GM23248 (cell line): ENCODE measurements at regions of chrX and their contacts with region 1.

Region 1: GRCh38 chrX:34656842-34657725 is at the start of gene TMEM47:
- DNase-seq: peak; percentile 84
- H3K4me3 ChIP-seq: peak within 1 kb of the TSS; percentile 95
- H3K27ac ChIP-seq: peak within 1 kb of the TSS; percentile 75
- H3K4me1 ChIP-seq: peaks cover 20% of the 10 kb centered on the region; the same call in 1 of the 2 replicates
- H3K27me3 ChIP-seq: no peaks in the 10 kb centered on the region
- total RNA-seq, gene TMEM47: 185 and 188 TPM in 2 replicates

Region 2: DNA sequence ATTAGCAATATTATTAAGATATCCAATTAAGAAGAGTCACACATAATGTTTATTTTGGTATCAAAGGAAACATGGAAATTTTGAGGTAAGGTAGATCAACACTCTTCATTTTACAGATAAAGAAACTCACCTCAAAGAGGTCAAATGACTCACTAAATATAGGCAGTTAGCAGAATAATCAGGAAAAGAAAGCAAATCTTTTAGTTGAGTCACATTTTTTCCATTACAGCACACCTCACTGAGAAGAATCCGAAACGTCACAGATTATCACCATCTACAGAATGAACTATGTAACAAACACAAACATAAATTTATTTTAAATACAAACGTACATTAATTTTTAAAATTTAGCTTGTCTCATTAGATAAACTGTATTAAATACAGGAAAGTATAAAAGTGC is 70.1 kb before region 1 on chrX:
- in situ Hi-C with region 1: no loop called
- DNase-seq: no peak
- H3K4me3 ChIP-seq: no peak overlapping the region
- H3K27ac ChIP-seq: no peak overlapping the region
- H3K4me1 ChIP-seq: no peaks in the 10 kb centered on the region
- H3K27me3 ChIP-seq: no peaks in the 10 kb centered on the region

Region 3: DNA sequence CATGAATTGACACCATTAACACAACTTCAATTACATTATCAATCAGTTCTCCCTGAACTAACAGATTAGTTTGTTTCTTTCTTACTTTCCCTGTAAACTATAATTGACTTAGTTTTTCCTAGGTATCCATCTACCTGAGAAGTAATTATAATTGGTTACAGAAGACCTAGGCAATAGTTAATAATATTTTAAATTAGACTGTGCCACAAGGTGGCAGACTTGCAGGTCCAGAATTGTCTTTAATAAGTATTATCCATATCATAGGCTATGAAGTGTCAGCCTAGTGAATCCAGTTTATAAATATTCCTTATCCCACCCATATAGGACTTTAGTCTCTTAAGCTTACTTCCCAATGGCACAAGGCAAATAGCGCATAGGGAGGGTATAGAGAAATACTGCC is 236.7 kb after region 1 on chrX:
- in situ Hi-C with region 1: loop called (anchors 25 kb)
- DNase-seq: peak; percentile 26
- H3K4me3 ChIP-seq: no peak overlapping the region
- H3K27ac ChIP-seq: no peak overlapping the region
- H3K4me1 ChIP-seq: no peaks in the 10 kb centered on the region
- H3K27me3 ChIP-seq: no peaks in the 10 kb centered on the region

Region 4: DNA sequence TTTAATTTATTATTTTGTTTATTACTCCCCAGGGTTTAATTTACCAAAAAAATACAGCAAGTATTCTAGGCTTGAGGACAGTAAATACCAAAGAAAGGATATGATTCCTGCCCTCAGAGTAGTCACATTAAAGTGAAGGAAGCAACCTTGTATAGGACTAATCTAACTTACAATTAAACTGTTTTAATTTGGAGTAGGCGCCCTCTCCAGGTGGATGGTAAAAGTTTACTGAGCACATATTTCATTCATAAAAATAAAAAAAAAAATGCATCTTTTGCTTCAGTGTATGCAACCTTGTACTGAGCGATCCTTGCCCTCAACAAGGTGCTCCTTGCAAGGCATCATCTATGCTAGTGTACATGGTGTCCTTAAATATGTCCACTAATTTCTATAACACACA is 1069.1 kb after region 1 on chrX:
- in situ Hi-C with region 1: no loop called
- DNase-seq: peak; percentile 23
- H3K4me3 ChIP-seq: no peak overlapping the region
- H3K27ac ChIP-seq: no peak overlapping the region
- H3K4me1 ChIP-seq: no peaks in the 10 kb centered on the region
- H3K27me3 ChIP-seq: no peaks in the 10 kb centered on the region